T-cell (primary cell): ENCODE measurements at regions of chr1 and their contacts with region 1.

Region 1: DNA sequence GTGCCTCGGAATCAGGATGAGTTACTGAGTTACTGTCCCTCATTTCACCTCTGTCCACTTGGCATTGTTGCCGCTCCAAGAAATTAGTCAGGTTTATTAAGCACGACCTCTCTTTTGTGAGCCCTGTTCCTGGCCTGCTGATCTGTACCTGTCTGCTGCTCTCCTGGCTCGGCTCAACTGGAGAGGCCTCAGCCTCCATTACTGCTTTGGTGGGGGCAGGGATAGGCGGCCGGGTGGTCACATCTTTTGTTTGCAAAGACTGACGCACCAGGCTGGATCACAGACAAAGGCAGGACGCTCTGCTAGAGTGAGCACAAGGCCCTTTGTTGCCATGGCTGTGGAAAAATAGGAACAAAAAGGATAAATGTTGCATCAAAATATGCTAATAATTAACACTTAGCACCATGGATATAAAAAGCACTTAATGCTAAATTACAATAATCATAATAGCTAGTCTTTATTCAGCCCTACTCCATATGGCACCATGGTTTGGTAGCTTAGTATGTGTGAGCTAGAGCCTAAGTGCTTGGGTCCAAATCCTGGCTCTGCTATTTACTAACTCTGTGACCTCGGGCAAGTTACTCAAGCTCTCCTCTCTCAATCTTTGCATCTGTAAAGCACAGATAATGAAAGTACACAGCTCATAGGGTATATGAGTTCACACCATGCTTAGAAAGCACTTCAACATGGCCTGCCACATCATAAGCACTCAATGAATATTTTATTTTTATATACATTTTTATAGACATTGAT is 28.9 kb upstream of the HPDL start:
- DNase-seq: no peak
- ATAC-seq: no peak
- H3K4me3 ChIP-seq: no peak overlapping the region
- H3K4me3 Mint-ChIP-seq: no peak overlapping the region
- H3K27ac ChIP-seq: no peak overlapping the region
- H3K27ac Mint-ChIP-seq: no peak overlapping the region
- H3K4me1 ChIP-seq: peaks cover 0 to 2% of the 10 kb centered on the region in 2 experiments
- H3K4me1 Mint-ChIP-seq: peaks cover 5 to 10% (median 6%) of the 10 kb centered on the region in 3 donors
- H3K27me3 ChIP-seq: no peaks in the 10 kb centered on the region
- H3K27me3 Mint-ChIP-seq: no peaks in the 10 kb centered on the region

Region 2: DNA sequence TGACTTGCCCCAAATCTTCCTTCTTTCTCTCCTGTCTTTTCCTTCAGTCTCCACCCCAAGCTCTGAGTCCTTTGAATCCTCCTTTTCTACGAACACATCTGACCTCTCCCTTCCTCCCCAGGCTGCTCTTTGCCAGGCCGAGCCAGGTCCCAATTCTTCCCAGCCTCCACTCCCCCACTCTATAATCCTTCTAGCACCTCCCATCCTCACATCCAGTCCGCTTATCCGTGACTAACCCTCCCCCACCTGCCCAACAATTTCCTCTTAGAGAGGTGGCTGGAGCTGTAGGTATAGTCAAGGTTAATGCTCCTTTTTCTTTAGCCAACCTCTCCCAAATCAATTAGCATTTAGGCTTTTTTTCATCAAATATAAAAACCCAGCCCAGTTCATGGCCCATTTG is 19.4 kb after region 1 on chr1:
- CTCF ChIA-PET with region 1: no interaction called
- POLR2A ChIA-PET with region 1: no interaction called
- DNase-seq: no peak
- ATAC-seq: no peak
- H3K4me3 ChIP-seq: no peak overlapping the region
- H3K4me3 Mint-ChIP-seq: no peak overlapping the region
- H3K27ac ChIP-seq: no peak overlapping the region
- H3K27ac Mint-ChIP-seq: no peak overlapping the region
- H3K4me1 ChIP-seq: no peaks in the 10 kb centered on the region
- H3K4me1 Mint-ChIP-seq: no peaks in the 10 kb centered on the region
- H3K27me3 ChIP-seq: no peaks in the 10 kb centered on the region
- H3K27me3 Mint-ChIP-seq: no peaks in the 10 kb centered on the region

Region 3: DNA sequence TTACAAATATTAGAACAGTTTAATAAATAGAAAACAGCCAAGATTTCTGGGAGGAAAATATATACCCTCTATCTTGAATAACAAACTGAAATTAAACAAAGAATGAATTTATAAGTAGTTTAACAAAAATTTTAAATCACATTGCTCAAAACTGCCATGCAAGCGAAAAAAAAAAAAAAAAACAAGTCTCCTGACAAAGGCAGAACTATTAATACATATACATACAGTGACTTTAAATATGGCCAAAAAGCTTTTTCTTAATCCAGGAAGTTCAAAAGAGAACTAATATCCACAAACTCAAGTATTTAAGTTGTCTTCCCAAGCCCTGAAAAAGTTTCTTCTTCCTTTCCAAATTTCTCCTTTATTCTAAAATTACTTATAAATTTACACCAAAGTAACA is 105.9 kb after region 1 on chr1:
- CTCF ChIA-PET with region 1: no interaction called
- POLR2A ChIA-PET with region 1: interaction called in 1 of 2 experiments, 10 read pairs
- DNase-seq: no peak
- ATAC-seq: no peak
- H3K4me3 ChIP-seq: no peak overlapping the region
- H3K4me3 Mint-ChIP-seq: no peak overlapping the region
- H3K27ac ChIP-seq: no peak overlapping the region
- H3K27ac Mint-ChIP-seq: no peak overlapping the region
- H3K4me1 ChIP-seq: no peaks in the 10 kb centered on the region
- H3K4me1 Mint-ChIP-seq: no peaks in the 10 kb centered on the region
- H3K27me3 ChIP-seq: no peaks in the 10 kb centered on the region
- H3K27me3 Mint-ChIP-seq: no peaks in the 10 kb centered on the region